ENCODE measurements at regions of chr16 and their contacts with region 1.

Region 1: GRCh38 chr16:50326949-50327402 is 41.8 kb downstream of the BRD7 start:
- DNase-seq: peak in 8 of 9 donors; percentile 53 to 89 (median 78)
- ATAC-seq: peak; percentile 97
- H3K4me3 ChIP-seq: no peak overlapping the region
- H3K4me3 Mint-ChIP-seq: peak overlapping the region in 8 of 10 donors; percentile 8 to 57 (median 26)
- H3K27ac ChIP-seq: peak overlapping the region; percentile 44
- H3K27ac Mint-ChIP-seq: peak overlapping the region; percentile 54 to 94 (median 81)
- H3K4me1 ChIP-seq: peaks cover 10 to 34% of the 10 kb centered on the region in 2 donors
- H3K4me1 Mint-ChIP-seq: peaks cover 37 to 62% (median 49%) of the 10 kb centered on the region in 7 donors
- H3K27me3 ChIP-seq: no peaks in the 10 kb centered on the region
- H3K27me3 Mint-ChIP-seq: no peaks in the 10 kb centered on the region

Region 2: GRCh38 chr16:50273681-50274325 is 53.2 kb before region 1 on chr16:
- CTCF ChIA-PET with region 1: interaction called, 9 read pairs
- POLR2A ChIA-PET with region 1: interaction called, 10 read pairs
- intact Hi-C with region 1: no loop called
- DNase-seq: peak in 5 of 9 donors; percentile 26 to 52 (median 40)
- ATAC-seq: peak; percentile 65
- H3K4me3 ChIP-seq: peak overlapping the region; percentile 67
- H3K4me3 Mint-ChIP-seq: peak overlapping the region; percentile 83 to 98 (median 92)
- H3K27ac ChIP-seq: peak overlapping the region; percentile 88
- H3K27ac Mint-ChIP-seq: peak overlapping the region; percentile 95 to 99 (median 99)
- H3K4me1 ChIP-seq: peaks cover 93% of the 10 kb centered on the region in 2 donors
- H3K4me1 Mint-ChIP-seq: peaks cover 72 to 99% (median 93%) of the 10 kb centered on the region in 7 donors
- H3K27me3 ChIP-seq: no peaks in the 10 kb centered on the region
- H3K27me3 Mint-ChIP-seq: no peaks in the 10 kb centered on the region

Region 3: DNA sequence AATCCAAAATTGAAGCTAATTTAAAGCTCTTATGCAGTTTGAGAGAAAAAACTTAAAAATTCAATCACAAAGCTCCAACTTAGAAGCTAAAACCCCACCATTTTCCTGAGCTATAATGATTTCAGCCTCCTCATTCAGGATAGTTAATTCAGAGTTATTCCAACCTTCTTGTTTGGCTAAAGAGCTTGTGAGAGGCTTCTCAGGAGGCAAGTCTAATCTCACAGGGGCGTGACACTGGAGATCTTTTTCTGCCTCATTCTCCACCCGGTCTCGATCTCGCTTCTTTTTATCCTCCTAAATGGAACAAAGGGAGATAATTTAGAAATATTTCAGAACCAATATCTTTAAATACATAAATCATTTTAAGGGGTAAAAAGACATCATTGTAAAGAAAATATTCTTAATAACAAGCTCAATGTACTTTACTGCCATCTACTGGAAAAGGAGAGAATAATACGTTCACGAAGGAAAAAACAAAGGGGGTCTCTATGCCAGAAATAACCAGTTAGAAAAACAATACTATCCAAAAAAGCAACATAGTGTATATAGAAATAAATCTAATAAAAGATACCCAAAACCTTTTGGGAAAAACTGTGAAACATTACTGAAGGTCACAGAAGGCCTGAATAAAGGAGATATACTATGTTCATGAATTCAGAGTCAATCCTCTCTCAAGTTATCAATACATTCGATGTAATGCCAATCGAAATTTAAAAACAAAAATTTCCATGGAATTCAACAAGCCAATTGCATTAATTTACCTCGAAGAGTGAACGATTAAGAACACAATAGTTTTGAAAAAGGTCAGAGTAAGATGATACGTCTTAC is 27.9 kb after region 1 on chr16:
- CTCF ChIA-PET with region 1: interaction called, 203 read pairs
- POLR2A ChIA-PET with region 1: interaction called, 80 read pairs
- intact Hi-C with region 1: loop called (anchors 1 kb)
- DNase-seq: peak in 5 of 9 donors; percentile 32 to 63 (median 51)
- ATAC-seq: peak; percentile 68
- H3K4me3 ChIP-seq: no peak overlapping the region
- H3K4me3 Mint-ChIP-seq: peak overlapping the region in 1 of 10 donors; percentile 21
- H3K27ac ChIP-seq: peak overlapping the region; percentile 31
- H3K27ac Mint-ChIP-seq: peak overlapping the region in 8 of 9 donors; percentile 2 to 91 (median 68)
- H3K4me1 ChIP-seq: no peaks in the 10 kb centered on the region
- H3K4me1 Mint-ChIP-seq: peaks cover 9 to 41% (median 25%) of the 10 kb centered on the region in 7 donors
- H3K27me3 ChIP-seq: no peaks in the 10 kb centered on the region
- H3K27me3 Mint-ChIP-seq: no peaks in the 10 kb centered on the region

Region 4: DNA sequence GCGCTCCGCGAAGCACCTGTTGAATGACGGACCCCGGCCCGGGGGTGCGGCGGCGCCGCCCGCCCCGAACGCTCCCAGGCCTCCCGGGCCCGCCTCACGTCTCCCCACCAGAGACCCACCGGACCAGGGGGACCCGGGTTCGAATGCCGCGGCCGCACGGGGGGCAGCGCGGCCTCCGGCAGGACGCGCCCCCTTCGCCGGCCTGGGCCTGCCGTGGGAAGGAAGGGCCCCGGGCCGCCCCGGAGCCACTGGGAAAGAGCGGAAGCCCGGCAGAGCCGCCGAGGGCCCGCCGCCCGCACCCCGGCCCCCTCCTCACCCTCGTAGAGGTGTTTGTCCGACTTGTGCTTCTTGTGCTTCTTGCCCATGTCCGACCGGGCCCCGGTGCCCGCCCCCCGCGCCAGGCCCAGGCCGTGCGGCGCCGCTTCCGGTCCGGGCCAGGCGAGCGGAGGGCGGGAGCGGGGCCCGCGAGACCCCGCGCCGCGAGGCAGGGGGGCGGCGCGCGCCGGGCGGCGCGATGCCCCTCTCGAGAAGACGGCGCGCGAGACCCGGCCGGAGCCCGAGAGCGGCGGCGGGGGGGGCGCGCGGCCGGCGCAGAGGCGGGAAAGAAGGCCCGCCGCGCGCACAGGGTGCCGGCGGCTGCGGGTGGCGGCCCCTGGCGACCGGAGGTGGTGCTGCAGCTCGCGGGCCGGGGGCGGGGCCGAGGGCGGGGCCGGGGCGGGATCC is 41.6 kb after region 1 on chr16 and contains the start of gene BRD7:
- CTCF ChIA-PET with region 1: interaction called, 8 read pairs
- POLR2A ChIA-PET with region 1: interaction called, 4 read pairs
- intact Hi-C with region 1: loop called (anchors 1 to 5 kb)
- DNase-seq: peak; percentile 50 to 82 (median 68)
- ATAC-seq: peak; percentile 98
- H3K4me3 ChIP-seq: peak within 1 kb of the TSS; percentile 61
- H3K4me3 Mint-ChIP-seq: peak within 1 kb of the TSS; percentile 92 to 98 (median 96)
- H3K27ac ChIP-seq: peak within 1 kb of the TSS; percentile 86
- H3K27ac Mint-ChIP-seq: peak within 1 kb of the TSS; percentile 92 to 99 (median 96)
- H3K4me1 ChIP-seq: peaks cover 27 to 39% of the 10 kb centered on the region in 2 donors
- H3K4me1 Mint-ChIP-seq: peaks cover 40 to 58% (median 56%) of the 10 kb centered on the region in 7 donors
- H3K27me3 ChIP-seq: no peaks in the 10 kb centered on the region
- H3K27me3 Mint-ChIP-seq: no peaks in the 10 kb centered on the region
- total RNA-seq, gene BRD7: 80.9 to 91.1 (median 85.0) TPM

Region 5: GRCh38 chr16:50627419-50627818 is 300.4 kb after region 1 on chr16:
- CTCF ChIA-PET with region 1: interaction called, 7 read pairs
- POLR2A ChIA-PET with region 1: no interaction called
- intact Hi-C with region 1: loop called in 1 of 2 experiments (anchors 1 kb)
- DNase-seq: peak in 7 of 9 donors; percentile 29 to 67 (median 57)
- ATAC-seq: peak; percentile 78
- H3K4me3 ChIP-seq: peak overlapping the region; percentile 29
- H3K4me3 Mint-ChIP-seq: peak overlapping the region; percentile 68 to 90 (median 84)
- H3K27ac ChIP-seq: peak overlapping the region; percentile 43
- H3K27ac Mint-ChIP-seq: peak overlapping the region; percentile 71 to 95 (median 88)
- H3K4me1 ChIP-seq: peaks cover 0 to 45% of the 10 kb centered on the region in 2 donors
- H3K4me1 Mint-ChIP-seq: peaks cover 29 to 50% (median 44%) of the 10 kb centered on the region in 7 donors
- H3K27me3 ChIP-seq: no peaks in the 10 kb centered on the region
- H3K27me3 Mint-ChIP-seq: no peaks in the 10 kb centered on the region

Region 6: DNA sequence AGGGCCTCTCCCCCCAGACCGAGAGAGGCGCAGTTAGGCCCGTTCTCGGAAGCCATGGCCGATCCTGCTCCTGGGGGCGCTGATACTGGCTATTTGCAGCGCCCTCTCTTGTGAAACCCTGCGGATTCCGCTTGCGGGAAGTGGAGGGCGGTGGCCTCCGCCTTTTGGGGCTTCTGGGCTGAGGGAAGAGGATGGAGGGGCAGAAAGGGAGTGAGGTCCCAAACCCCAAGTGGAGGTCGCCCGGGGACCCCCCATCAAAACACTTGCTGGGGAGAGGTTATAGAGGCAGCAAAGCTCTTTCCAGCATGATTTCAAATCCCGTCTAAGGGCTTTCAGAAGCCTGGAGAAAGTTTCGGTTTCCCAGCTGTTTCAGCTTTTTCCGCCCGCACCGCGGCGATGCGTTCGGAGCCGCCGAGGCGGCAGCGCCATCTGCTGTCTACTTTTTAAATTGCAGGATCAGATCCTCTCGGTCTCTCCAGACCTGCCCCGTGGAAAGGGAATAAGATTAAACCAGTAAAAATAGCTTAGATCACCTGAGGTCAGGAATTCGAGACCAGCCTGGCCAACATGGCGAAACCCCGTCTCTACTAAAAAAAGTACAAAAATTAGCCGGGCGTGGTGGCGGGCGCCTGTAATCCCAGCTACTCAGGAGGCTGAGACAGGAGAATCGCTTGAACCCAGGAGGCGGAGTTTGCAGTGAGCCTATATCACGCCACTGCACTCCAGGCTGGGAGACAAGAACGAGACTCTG is 338.3 kb after region 1 on chr16:
- CTCF ChIA-PET with region 1: interaction called, 34 read pairs
- POLR2A ChIA-PET with region 1: no interaction called
- intact Hi-C with region 1: loop called (anchors 1 kb)
- DNase-seq: peak; percentile 71 to 90 (median 77)
- ATAC-seq: peak; percentile 80
- H3K4me3 ChIP-seq: peak overlapping the region; percentile 60
- H3K4me3 Mint-ChIP-seq: peak overlapping the region; percentile 73 to 87 (median 84)
- H3K27ac ChIP-seq: peak overlapping the region; percentile 62
- H3K27ac Mint-ChIP-seq: peak overlapping the region; percentile 82 to 97 (median 89)
- H3K4me1 ChIP-seq: peaks cover 17% of the 10 kb centered on the region in 2 donors
- H3K4me1 Mint-ChIP-seq: peaks cover 28 to 49% (median 44%) of the 10 kb centered on the region in 7 donors
- H3K27me3 ChIP-seq: no peaks in the 10 kb centered on the region
- H3K27me3 Mint-ChIP-seq: no peaks in the 10 kb centered on the region

Measured in naive thymus-derived CD4-positive, alpha-beta T cell (primary cell).